Cardiac septum (tissue), 1 donor: ENCODE measurements at regions of chr16 and their contacts with region 1.

Region 1: GRCh38 chr16:28277537-28278388 is 14.6 kb upstream of the SBK1 start:
- DNase-seq: peak; percentile 93

Region 2: DNA sequence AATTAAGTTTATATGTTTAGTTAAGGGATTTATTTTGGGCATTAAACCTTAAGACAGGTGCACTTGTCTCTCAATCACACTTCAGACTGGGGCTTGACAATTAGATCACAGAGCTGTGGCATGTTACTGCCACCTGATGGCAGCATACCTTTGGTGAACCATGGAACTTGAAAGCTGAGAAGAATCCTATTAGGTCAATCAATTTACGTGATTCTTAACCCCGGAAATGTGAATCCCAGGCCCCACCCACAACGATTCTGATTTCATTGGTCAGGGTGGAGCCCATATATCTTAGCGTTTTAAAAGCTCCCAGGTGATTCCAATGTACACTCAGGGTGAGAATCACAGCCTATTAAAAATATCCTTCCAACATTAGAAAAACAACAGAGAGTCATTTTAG is 305.3 kb before region 1 on chr16:
- intact Hi-C with region 1: no loop called
- DNase-seq: peak; percentile 15

Region 3: DNA sequence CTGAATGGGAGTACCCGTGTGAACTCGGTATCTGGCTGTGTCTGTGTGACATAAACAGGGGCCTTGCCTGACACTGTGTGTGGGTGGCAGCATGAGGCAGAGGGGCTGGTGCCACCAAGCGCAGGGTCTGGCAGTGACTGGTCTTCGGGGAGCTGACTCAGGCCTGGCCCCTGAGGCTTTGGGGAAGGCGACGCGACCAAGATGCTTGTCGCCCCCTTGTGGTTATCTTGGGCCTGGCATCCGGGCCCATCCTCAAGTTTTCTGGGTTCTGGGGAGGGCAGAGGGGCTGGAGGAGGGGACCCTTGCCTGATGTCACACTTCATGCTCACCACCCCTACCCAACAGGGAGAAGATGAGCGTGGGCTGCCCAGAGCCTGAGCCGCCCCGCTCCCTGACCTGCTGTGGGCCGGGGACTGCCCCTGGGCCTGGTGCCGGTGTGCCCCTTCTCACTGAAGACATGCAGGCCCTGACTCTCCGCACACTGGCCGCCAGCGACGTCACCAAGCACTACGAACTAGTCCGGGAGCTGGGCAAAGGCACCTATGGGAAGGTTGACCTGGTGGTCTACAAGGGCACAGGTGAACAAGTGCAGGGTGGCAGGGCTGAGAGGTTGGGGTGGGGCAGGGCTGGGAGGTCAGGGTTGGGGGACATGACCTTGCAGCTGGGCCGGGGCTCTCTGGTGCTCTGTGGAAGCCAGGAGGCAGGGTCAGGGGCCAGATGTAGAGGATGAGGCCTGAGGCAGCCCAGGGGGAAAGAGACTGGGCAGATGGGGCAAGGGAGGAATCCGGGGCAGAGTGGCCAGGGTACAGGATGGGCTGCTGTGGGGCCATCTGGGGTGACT is 39.5 kb after region 1 on chr16:
- intact Hi-C with region 1: loop called (anchors 5 kb)
- DNase-seq: no peak